HCT116 (cell line): ENCODE measurements at regions of chr2 and their contacts with region 1.

Region 1: GRCh38 chr2:27441958-27442919 is at the start of gene KRTCAP3:
- DNase-seq: peak; percentile 42
- ATAC-seq: peak; percentile 94
- H3K4me3 ChIP-seq: peak within 1 kb of the TSS; percentile 53 to 81
- H3K27ac ChIP-seq: peak within 1 kb of the TSS; percentile 67
- H3K4me1 ChIP-seq: peaks cover 2 to 29% of the 10 kb centered on the region in 2 experiments; a peak in 2 of 4 replicates
- H3K27me3 ChIP-seq: no peaks in the 10 kb centered on the region
- CTCF ChIP-seq: peak; percentile 39 to 55 (median 48); a peak in 5 of 6 replicates
- POLR2A ChIP-seq: peak; percentile 30
- RAD21 ChIP-seq: peak; percentile 40
- total RNA-seq, gene KRTCAP3: 65.7 TPM

Region 2: DNA sequence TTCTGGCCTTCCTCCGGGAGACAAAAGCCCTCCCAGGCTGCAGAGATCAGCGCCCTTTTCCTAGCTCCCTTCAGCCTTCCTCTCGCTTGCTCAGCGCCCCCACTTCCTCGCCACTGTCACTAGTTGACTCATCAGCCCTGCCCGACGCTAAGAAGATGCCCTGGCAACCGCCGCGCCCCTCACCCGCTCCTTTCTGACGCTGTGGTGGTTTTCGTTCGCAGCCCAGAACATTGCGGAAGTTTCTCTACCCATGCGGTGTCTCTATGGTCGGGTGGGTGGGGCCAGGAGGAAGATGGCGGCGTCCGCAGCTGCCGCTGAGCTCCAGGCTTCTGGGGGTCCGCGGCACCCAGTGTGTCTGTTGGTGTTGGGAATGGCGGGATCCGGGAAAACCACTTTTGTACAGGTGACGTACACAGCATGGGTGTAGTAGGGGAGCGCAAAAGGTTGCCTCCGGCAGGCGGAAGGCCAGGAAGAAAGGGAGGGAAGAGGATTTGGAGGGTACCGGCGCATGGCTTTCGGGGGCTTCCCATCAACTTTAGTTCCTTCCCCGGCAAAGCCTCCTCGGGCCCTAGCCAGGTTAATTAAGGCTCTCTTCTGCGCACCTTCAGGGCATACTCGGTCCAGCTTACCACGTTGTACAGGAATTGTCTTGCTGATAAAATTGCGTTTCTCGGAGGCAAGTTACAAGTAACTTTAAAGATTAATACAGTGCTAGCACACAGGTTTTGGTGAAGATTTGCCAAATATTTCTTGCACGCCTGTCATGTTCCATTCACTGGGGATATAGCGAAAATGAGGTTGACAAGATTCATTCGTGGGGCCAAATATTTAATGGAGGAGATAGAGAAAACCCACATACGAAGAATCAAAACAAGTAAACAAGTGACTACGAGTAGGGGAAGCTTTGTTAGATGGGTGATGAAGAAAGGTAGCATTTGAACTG is 186.8 kb after region 1 on chr2 and contains the starts of genes CCDC121 and GPN1:
- CTCF ChIA-PET with region 1: no interaction called
- POLR2A ChIA-PET with region 1: no interaction called
- RAD21 ChIA-PET with region 1: no interaction called
- intact Hi-C with region 1: loop called (anchors 10 kb)
- DNase-seq: peak; percentile 59
- ATAC-seq: peak; percentile 93
- H3K4me3 ChIP-seq: peak within 1 kb of the TSS; percentile 91 to 93
- H3K27ac ChIP-seq: peak within 1 kb of the TSS; percentile 46
- H3K4me1 ChIP-seq: peaks cover 9 to 24% of the 10 kb centered on the region in 2 experiments
- H3K27me3 ChIP-seq: no peaks in the 10 kb centered on the region
- CTCF ChIP-seq: no peak
- POLR2A ChIP-seq: peak; percentile 90
- RAD21 ChIP-seq: no peak
- total RNA-seq, gene CCDC121: 2.1 TPM
- total RNA-seq, gene GPN1: 34.3 TPM